Activated CD4-positive, alpha-beta T cell treated with anti-CD3 and anti-CD28 coated beads for 36 hours (primary cell): ENCODE measurements at regions of chr19 and their contacts with region 1.

Region 1: GRCh38 chr19:11881151-11881800 is 6.3 kb upstream of the ZNF69 start:
- DNase-seq: peak; percentile 75
- ATAC-seq: peak; percentile 77
- H3K4me3 Mint-ChIP-seq: no peak overlapping the region
- H3K27ac Mint-ChIP-seq: no peak overlapping the region
- H3K4me1 Mint-ChIP-seq: no peaks in the 10 kb centered on the region
- H3K27me3 Mint-ChIP-seq: no peaks in the 10 kb centered on the region

Region 2: GRCh38 chr19:11551603-11552235 is 329.6 kb before region 1 on chr19:
- CTCF ChIA-PET with region 1: no interaction called
- POLR2A ChIA-PET with region 1: no interaction called
- intact Hi-C with region 1: no loop called
- DNase-seq: peak; percentile 43
- ATAC-seq: peak; percentile 53
- H3K4me3 Mint-ChIP-seq: no peak overlapping the region
- H3K27ac Mint-ChIP-seq: no peak overlapping the region
- H3K4me1 Mint-ChIP-seq: peaks cover 16% of the 10 kb centered on the region
- H3K27me3 Mint-ChIP-seq: no peaks in the 10 kb centered on the region

Region 3: DNA sequence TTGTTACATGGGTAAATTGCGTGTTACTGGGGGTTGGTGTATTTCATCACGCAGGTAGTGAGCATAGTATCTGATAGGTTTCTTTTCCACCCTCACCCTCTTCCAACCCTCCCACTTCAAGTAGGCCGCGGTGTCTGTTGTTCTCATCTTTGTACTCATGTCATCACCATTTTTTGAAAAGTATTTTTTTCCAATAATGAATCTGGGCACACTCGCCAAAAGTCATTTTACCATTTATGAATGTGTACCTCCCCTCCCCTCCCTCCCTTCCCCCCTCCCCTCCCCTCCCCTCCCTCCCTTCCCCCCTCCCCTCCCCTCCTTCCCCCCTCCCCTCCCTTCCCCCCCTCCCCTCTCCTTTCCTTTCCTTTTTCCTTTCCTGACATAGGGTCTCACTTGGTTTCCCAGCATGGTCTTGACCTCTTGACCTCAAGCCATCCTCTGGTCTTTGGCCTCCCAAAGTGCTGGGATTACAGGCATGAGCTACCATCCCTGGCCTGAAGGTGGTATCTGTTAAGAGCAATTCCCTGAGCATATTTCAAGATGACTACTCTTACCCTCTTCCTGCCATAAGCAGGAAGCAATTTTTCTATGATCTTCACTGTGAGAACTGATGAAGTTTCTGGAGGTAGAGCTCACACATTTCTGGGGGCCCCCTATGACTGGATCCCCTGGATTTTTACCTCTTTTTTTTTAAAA is 268.3 kb before region 1 on chr19:
- CTCF ChIA-PET with region 1: no interaction called
- POLR2A ChIA-PET with region 1: no interaction called
- intact Hi-C with region 1: no loop called
- DNase-seq: peak; percentile 19
- ATAC-seq: peak; percentile 68
- H3K4me3 Mint-ChIP-seq: no peak overlapping the region
- H3K27ac Mint-ChIP-seq: peak overlapping the region; percentile 60
- H3K4me1 Mint-ChIP-seq: peaks cover 7% of the 10 kb centered on the region
- H3K27me3 Mint-ChIP-seq: no peaks in the 10 kb centered on the region

Region 4: DNA sequence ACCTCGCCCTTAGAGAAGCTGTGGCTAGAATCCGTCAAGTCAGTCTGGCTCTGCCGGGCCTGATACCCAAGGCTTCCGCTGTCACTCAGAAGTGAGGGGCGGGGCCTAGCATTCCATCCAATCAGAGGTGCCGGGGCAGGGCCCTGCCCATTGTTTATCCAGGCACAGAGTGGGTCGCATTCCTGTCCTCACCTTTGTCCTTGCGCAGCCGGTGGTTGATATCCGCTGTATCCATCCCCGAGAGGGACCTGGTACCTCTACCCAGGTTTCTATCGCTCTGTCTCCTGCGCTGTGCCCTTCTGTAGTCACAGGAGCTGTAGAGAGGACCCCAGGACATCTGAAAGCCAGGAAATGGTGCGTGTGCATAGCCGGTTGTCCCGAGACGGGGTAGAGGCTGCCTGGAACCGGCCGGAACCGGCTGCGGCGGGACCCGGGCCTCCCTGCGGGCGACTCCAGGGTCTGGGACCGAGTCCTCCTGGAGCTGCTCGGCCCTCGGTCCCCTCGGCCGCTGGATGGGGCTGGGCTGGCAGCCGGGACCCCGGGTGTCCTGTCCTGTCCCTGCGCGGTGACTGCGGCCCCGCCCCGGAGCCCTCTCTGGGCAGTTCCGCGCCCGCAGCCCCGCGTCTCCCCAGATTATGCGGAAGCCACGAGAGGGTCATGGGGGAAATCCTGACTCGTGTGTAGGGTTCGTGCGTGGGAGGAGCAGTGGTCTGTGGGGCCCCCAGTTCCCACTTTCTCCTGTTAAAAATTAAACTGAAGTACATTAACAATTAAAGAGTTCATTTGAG is 83.8 kb after region 1 on chr19 and contains the start of gene ZNF763:
- CTCF ChIA-PET with region 1: interaction called, 8 read pairs
- POLR2A ChIA-PET with region 1: no interaction called
- intact Hi-C with region 1: loop called in 1 of 2 experiments (anchors 1 kb)
- DNase-seq: peak; percentile 94
- ATAC-seq: peak; percentile 98
- H3K4me3 Mint-ChIP-seq: peak within 1 kb of the TSS; percentile 84
- H3K27ac Mint-ChIP-seq: peak within 1 kb of the TSS; percentile 73
- H3K4me1 Mint-ChIP-seq: peaks cover 20% of the 10 kb centered on the region
- H3K27me3 Mint-ChIP-seq: no peaks in the 10 kb centered on the region
- total RNA-seq, gene ZNF763: 1.1 to 1.2 TPM

Region 5: DNA sequence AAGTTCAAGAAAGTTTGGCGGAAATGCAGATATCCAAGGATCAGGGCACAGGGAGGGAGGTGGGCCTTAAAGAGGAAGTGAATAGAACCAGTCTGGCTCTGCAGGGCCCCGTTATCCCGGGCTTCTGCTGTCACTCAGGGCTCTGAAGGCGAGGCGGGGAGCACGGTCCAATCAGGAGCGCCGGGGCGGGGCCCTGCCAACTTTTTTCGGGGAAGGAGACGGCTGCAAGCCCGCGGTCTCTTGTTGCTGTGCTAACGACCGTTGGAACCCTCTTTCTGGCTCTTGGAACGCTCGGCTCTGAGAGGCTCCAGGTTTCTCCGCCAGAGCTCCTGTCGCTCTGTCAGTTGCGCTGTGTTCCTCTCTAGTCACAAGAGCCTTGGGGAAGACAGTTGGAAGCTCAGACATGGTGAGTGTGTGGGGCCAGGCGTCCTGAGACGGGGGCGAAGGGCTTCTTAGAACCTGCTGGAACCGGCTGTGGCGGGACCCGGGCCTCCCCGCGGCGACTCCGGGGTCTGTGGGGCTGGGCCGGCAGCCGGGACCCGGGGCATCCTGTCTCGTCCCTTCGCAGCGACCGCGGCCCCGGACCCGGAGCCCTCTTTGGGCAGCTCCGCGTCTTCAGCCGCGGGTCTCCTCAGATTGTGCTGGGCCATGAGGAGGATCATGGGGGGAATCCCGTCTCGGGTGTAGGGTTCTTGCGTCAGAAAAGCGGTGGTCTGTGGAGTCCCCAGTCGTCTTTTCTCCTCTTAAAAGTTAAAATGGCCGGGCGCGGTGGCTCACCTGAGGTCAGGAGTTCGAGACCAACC is 211.0 kb after region 1 on chr19:
- CTCF ChIA-PET with region 1: no interaction called
- POLR2A ChIA-PET with region 1: no interaction called
- intact Hi-C with region 1: no loop called
- DNase-seq: peak; percentile 90
- ATAC-seq: peak; percentile 92
- H3K4me3 Mint-ChIP-seq: peak overlapping the region; percentile 80
- H3K27ac Mint-ChIP-seq: peak overlapping the region; percentile 69
- H3K4me1 Mint-ChIP-seq: peaks cover 10% of the 10 kb centered on the region
- H3K27me3 Mint-ChIP-seq: peaks cover 6% of the 10 kb centered on the region